PC-3 (cell line): ENCODE measurements at regions of chr10 and their contacts with region 1.

Region 1: DNA sequence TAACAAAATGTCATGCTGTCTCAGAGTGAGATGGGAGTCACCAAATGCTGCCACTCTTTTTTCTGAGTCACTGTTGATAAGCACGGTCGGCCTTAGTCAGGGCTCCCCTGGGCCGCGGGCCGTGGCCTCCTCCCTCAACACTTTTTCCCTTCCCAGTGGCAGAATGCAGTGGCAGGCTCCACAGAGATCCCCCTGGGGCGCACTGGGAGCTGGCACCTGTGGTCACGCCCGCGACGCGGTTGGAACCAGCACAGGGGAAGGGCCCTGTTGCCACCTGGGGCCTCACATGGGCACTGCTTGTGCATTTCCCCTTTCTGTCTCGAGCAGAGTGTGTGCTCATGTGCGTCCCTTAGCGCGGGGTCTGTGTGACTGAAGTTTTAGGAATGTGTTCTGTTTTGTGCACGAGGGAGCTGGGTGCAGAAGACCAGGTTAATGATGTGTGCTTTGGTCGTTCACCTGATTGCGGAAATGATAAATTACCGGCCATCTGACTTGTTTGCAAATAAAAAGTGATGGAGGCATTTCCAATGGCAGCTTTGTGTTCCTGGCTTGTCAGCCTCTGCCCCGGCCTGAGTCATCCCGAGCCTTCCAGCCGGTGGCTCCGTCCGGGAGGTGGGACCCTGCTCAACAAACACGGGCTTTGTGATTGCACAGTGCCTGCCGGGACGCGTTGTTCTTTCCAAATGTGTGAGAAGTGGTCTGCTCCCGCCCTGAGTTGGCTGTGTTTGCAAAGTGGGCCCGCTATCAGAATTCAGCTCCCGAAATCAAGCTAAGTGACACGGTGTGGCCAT is 100.7 kb downstream of the NKX6-2 start:
- DNase-seq: peak; percentile 88
- ATAC-seq: peak; percentile 86
- H3K4me3 ChIP-seq: peak overlapping the region; percentile 49
- H3K27ac ChIP-seq: peak overlapping the region; percentile 99
- H3K4me1 ChIP-seq: peaks cover 32% of the 10 kb centered on the region
- H3K27me3 ChIP-seq: no peaks in the 10 kb centered on the region
- CTCF ChIP-seq: no peak

Region 2: DNA sequence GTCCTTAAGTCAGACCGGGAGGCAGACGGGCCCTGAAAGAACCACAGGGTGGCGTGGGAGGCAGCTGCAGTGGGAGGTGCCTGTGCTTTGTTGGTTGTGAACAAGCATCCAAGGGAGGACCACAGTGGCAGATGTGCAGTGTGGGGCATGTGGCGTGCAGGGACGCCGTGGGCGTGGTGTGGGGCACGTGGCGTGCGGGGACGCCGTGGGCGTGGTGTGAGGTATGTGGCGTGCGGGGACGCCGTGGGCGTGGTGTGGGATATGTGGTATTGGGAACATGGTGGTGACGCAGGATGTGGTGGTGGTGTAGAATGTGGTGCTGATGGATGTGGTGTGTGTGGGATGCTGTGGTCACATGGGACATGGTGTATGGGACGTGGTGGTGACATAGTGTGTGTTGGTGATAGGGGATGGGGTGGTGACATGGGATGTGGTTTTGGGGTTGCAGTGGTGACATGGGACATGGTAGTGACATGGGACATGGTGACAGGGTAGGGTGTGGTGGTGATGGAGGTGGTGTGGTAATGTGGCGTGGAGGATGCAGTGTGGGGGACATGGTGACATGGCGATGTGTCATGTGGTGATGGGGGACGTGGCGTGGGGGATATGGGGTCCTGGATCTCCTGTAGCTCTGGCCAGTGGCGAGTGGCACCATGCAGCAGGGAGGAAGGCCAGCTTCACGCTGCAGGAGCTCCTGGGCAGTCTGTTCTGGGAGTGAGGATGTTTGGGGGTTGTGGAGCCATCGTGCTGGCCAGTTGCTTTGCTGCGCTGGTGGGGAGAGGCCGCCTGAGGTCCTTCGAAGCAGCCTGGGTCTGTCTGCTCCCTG is 68.9 kb before region 1 on chr10:
- CTCF ChIA-PET with region 1: no interaction called
- POLR2A ChIA-PET with region 1: no interaction called
- intact Hi-C with region 1: no loop called
- DNase-seq: no peak
- ATAC-seq: no peak
- H3K4me3 ChIP-seq: no peak overlapping the region
- H3K27ac ChIP-seq: no peak overlapping the region
- H3K4me1 ChIP-seq: no peaks in the 10 kb centered on the region
- H3K27me3 ChIP-seq: no peaks in the 10 kb centered on the region
- CTCF ChIP-seq: no peak

Region 3: GRCh38 chr10:132654702-132655661 is 30.3 kb before region 1 on chr10:
- CTCF ChIA-PET with region 1: interaction called, 3 read pairs
- POLR2A ChIA-PET with region 1: no interaction called
- intact Hi-C with region 1: loop called (anchors 5 kb)
- DNase-seq: peak; percentile 69
- ATAC-seq: peak; percentile 73
- H3K4me3 ChIP-seq: no peak overlapping the region
- H3K27ac ChIP-seq: no peak overlapping the region
- H3K4me1 ChIP-seq: no peaks in the 10 kb centered on the region
- H3K27me3 ChIP-seq: no peaks in the 10 kb centered on the region
- CTCF ChIP-seq: peak; percentile 89

Region 4: GRCh38 chr10:132665946-132666704 is 19.2 kb before region 1 on chr10:
- CTCF ChIA-PET with region 1: no interaction called
- POLR2A ChIA-PET with region 1: interaction called, 8 read pairs
- intact Hi-C with region 1: loop called (anchors 1 kb)
- DNase-seq: peak; percentile 92
- ATAC-seq: peak; percentile 74
- H3K4me3 ChIP-seq: peak overlapping the region; percentile 75
- H3K27ac ChIP-seq: peak overlapping the region; percentile 100
- H3K4me1 ChIP-seq: peaks cover 40% of the 10 kb centered on the region
- H3K27me3 ChIP-seq: no peaks in the 10 kb centered on the region
- CTCF ChIP-seq: no peak

Region 5: GRCh38 chr10:132788180-132788830 is 103.0 kb after region 1 on chr10:
- CTCF ChIA-PET with region 1: no interaction called
- POLR2A ChIA-PET with region 1: no interaction called
- intact Hi-C with region 1: no loop called
- DNase-seq: peak; percentile 8
- ATAC-seq: peak; percentile 45
- H3K4me3 ChIP-seq: no peak overlapping the region
- H3K27ac ChIP-seq: no peak overlapping the region
- H3K4me1 ChIP-seq: no peaks in the 10 kb centered on the region
- H3K27me3 ChIP-seq: peaks cover 30% of the 10 kb centered on the region
- CTCF ChIP-seq: 0 out of 2 replicates have a peak, but pooled peaks have one; percentile 13